CD8-positive, alpha-beta T cell (primary cell): ENCODE measurements at regions of chr5 and their contacts with region 1.

Region 1: GRCh38 chr5:142324871-142325724 is at the start of gene SPRY4:
- DNase-seq: peak; percentile 51 to 90 (median 80)
- ATAC-seq: peak; percentile 79
- H3K4me3 ChIP-seq: peak within 1 kb of the TSS; percentile 51 to 62
- H3K4me3 Mint-ChIP-seq: peak within 1 kb of the TSS; percentile 86
- H3K27ac ChIP-seq: no peak within 1 kb of the TSS
- H3K27ac Mint-ChIP-seq: no peak within 1 kb of the TSS
- H3K4me1 ChIP-seq: peaks cover 34% of the 10 kb centered on the region
- H3K4me1 Mint-ChIP-seq: peaks cover 26% of the 10 kb centered on the region
- H3K27me3 ChIP-seq: peaks cover 19 to 37% of the 10 kb centered on the region in 2 experiments
- H3K27me3 Mint-ChIP-seq: peaks cover 72% of the 10 kb centered on the region
- CTCF ChIP-seq: no peak
- total RNA-seq, gene SPRY4: 0.53 to 1.2 TPM

Region 2: DNA sequence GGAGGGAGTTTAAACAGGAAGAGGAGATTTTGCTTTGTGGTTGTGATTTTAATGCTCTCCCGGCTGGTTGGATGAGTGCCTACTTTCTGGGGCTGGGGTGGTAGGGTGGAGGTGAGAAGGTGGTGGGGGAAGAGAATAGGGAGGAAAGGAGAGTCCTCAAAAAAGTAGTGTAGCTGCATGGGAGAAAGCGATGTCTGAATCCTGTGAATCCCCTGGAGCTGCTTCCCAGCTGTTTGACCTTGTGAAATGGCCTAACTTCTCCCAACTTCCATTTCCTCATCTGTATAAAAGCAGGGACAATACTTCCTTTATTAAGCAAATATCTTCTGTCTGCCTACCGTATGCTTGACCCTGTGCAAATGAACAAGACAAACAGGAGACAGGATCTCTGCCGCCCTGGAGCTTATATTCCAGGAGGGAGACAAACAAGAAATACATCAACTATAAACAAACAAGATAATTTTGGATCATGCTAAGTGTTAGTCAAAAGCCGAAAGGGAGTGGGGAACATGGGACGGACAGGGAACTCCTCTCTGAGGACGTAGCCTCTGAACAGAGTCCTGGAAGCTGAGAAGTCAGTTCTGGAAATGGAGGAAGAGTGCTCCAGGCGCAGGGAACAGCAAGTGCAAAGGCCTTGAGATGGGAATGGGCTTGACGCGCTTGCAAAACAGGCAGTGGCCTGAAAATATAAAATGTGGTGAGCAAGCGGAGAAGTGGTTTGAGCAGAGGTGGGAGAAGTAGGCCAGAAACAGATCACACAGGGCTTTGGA is 103.8 kb before region 1 on chr5:
- CTCF ChIA-PET with region 1: no interaction called
- POLR2A ChIA-PET with region 1: no interaction called
- intact Hi-C with region 1: loop called in 1 of 2 experiments (anchors 5 kb)
- DNase-seq: no peak
- ATAC-seq: no peak
- H3K4me3 ChIP-seq: no peak overlapping the region
- H3K4me3 Mint-ChIP-seq: no peak overlapping the region
- H3K27ac ChIP-seq: no peak overlapping the region
- H3K27ac Mint-ChIP-seq: peak overlapping the region; percentile 18
- H3K4me1 ChIP-seq: peaks cover 27% of the 10 kb centered on the region
- H3K4me1 Mint-ChIP-seq: peaks cover 42% of the 10 kb centered on the region
- H3K27me3 ChIP-seq: peaks cover 0 to 2% of the 10 kb centered on the region in 2 experiments
- H3K27me3 Mint-ChIP-seq: peaks cover 16% of the 10 kb centered on the region
- CTCF ChIP-seq: no peak

Region 3: DNA sequence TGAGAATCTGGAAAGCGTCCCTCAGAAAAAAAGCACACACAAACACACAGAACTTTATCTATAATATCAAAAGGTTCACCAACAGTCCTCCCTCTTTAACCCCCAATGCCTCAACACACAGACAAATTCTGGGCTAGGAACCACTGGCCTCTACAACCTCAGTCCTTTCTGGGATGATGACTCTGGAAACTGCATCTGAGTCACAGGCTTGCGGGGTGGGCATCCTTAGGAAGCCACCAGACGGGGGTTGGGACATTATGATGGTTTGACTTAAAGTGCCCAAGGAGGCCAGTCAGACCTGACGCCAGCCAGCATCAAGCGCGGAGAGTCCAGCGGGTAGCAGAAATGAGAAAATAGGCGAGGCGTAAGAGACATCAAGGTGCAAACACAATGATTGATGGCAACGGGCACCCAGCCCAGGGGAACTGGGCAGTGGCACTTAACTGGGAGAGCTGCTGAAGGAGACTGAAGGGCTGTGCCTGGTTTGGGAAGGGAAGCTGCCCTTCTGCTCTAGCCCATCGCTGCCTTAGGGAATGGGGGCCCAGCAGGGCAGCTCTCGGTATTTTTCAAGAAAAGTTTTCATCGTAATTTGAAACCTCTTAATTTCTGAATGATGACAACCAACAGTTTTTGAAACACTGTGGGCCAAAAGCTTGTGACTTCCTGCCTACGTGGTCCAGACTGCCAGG is 20.9 kb before region 1 on chr5:
- CTCF ChIA-PET with region 1: no interaction called
- POLR2A ChIA-PET with region 1: no interaction called
- intact Hi-C with region 1: no loop called
- DNase-seq: no peak
- ATAC-seq: no peak
- H3K4me3 ChIP-seq: no peak overlapping the region
- H3K4me3 Mint-ChIP-seq: no peak overlapping the region
- H3K27ac ChIP-seq: no peak overlapping the region
- H3K27ac Mint-ChIP-seq: no peak overlapping the region
- H3K4me1 ChIP-seq: no peaks in the 10 kb centered on the region
- H3K4me1 Mint-ChIP-seq: peaks cover 8% of the 10 kb centered on the region
- H3K27me3 ChIP-seq: no peaks in the 10 kb centered on the region
- H3K27me3 Mint-ChIP-seq: no peaks in the 10 kb centered on the region
- CTCF ChIP-seq: no peak

Region 4: GRCh38 chr5:142342128-142342981 is 17.3 kb after region 1 on chr5:
- CTCF ChIA-PET with region 1: no interaction called
- POLR2A ChIA-PET with region 1: no interaction called
- intact Hi-C with region 1: loop called in 1 of 2 experiments (anchors 1 kb)
- DNase-seq: no peak
- ATAC-seq: no peak
- H3K4me3 ChIP-seq: no peak overlapping the region
- H3K4me3 Mint-ChIP-seq: no peak overlapping the region
- H3K27ac ChIP-seq: no peak overlapping the region
- H3K27ac Mint-ChIP-seq: no peak overlapping the region
- H3K4me1 ChIP-seq: no peaks in the 10 kb centered on the region
- H3K4me1 Mint-ChIP-seq: no peaks in the 10 kb centered on the region
- H3K27me3 ChIP-seq: peaks cover 0 to 3% of the 10 kb centered on the region in 2 experiments
- H3K27me3 Mint-ChIP-seq: peaks cover 6% of the 10 kb centered on the region
- CTCF ChIP-seq: no peak

Region 5: DNA sequence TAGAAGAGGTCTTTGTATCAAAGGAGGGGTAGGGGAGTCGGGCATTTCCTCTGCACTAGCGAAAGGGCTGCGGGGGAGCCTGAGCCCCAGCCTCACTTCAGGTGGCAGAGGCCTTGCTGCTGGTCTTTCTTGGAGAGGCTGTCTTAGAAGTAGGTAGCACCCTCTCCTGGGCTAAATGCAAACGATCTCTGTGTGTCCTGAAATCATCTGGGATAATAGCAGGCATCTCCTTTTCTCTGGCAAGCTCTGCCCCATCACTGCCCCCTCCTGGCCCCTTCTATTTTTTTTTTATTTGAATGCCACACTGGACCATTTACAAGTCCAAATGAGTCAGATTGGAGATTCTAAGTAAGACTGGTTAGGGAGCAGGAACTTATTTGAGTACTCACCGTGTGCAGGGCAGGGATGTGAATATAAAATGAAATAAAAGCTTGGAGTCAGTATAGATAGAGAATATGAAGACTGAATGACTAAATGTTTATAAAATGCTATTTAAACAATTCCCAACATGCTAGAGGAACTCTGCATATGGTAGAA is 223.7 kb after region 1 on chr5:
- CTCF ChIA-PET with region 1: no interaction called
- POLR2A ChIA-PET with region 1: no interaction called
- intact Hi-C with region 1: loop called in 1 of 2 experiments (anchors 10 kb)
- DNase-seq: peak in 2 of 9 experiments; percentile 41 to 46
- ATAC-seq: peak; percentile 34
- H3K4me3 ChIP-seq: no peak overlapping the region
- H3K4me3 Mint-ChIP-seq: no peak overlapping the region
- H3K27ac ChIP-seq: no peak overlapping the region
- H3K27ac Mint-ChIP-seq: no peak overlapping the region
- H3K4me1 ChIP-seq: no peaks in the 10 kb centered on the region
- H3K4me1 Mint-ChIP-seq: peaks cover 10% of the 10 kb centered on the region
- H3K27me3 ChIP-seq: peaks cover 9 to 21% of the 10 kb centered on the region in 2 experiments
- H3K27me3 Mint-ChIP-seq: peaks cover 37% of the 10 kb centered on the region
- CTCF ChIP-seq: peak; percentile 36